ENCODE measurements at regions of chr5 and their contacts with region 1.

Region 1: DNA sequence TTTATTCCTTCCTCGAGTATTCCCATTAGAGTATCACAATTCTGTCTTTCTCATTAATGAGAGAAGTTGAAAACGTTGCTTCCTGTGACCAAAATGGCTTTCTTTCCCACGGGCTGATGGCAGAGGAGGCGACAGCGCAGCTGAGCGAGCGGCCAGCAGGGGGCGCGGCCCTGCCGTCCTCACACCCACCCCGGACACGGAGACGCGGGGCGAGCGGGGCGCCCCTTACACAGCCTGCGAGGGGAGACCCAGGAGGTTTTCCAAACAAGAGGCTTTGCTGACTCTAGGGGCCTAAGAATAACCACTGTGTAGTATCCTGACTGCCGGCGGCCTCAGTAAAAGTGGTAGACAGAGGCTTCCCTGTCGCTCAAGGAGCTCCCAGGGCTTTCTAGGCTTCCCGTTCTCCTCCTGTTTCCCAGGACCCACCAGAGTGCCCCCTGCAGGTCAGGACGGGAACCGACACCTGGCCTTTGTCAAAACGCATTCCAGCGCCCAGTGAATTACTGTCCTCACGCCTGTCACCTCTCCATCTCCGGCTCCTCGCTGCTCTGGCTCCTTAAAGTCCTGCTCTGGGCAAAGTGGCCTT is 27.3 kb upstream of the FGF1 start:
- DNase-seq: peak; percentile 90
- H3K4me3 ChIP-seq: peak overlapping the region in 2 of 3 experiments; percentile 39 to 44
- H3K27ac ChIP-seq: peak overlapping the region; percentile 43
- H3K4me1 ChIP-seq: peaks cover 11% of the 10 kb centered on the region
- H3K27me3 ChIP-seq: peaks cover 0 to 5% of the 10 kb centered on the region in 2 experiments
- CTCF ChIP-seq: peak; percentile 83 to 98
- POLR2A ChIP-seq: no peak

Region 2: DNA sequence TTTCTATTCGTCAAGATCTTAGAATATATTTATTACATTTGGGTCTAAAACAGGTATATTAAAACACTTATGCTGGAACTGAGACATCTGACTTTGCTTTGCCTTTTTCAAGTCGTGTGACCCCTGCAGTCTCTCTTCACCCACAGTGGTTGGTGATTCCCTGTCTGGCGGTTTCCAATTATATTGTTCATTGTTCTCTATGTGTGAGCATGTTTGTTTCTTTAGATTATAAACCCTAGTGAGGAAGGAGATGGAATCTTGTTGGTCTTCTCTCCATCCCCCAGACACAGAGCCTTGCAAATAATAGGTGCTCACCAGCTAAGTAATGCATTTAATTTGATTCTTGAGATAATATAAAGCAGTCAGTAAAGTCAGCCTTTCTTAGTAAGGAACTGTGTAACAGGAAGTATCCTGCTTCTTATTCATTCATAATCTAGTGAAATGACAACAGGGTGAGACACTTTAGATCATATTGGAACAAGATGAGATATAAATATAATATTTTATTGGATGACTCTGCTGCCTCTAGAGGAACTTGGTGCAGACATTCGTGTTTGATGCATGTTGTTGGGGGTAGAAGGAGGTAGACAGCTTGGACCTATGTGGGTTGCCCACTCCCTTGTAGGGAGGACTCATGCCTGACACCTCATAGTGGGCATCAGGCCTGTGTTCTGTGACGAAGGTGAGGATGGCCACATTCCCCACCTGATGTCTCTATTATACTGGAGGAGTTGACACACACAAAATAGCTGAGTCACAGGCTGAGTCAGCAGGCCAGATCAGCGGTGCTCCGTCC is 115.5 kb before region 1 on chr5:
- CTCF ChIA-PET with region 1: interaction called, 11 read pairs
- POLR2A ChIA-PET with region 1: no interaction called
- dilution Hi-C with region 1: no loop called
- intact Hi-C with region 1: no loop called
- DNase-seq: peak; percentile 81
- H3K4me3 ChIP-seq: no peak overlapping the region
- H3K27ac ChIP-seq: no peak overlapping the region
- H3K4me1 ChIP-seq: peaks cover 26% of the 10 kb centered on the region
- H3K27me3 ChIP-seq: no peaks in the 10 kb centered on the region
- CTCF ChIP-seq: no peak
- POLR2A ChIP-seq: no peak

Region 3: GRCh38 chr5:142664636-142665035 is 48.6 kb before region 1 on chr5:
- CTCF ChIA-PET with region 1: interaction called, 13 read pairs
- POLR2A ChIA-PET with region 1: no interaction called
- dilution Hi-C with region 1: no loop called
- intact Hi-C with region 1: no loop called
- DNase-seq: no peak
- H3K4me3 ChIP-seq: no peak overlapping the region
- H3K27ac ChIP-seq: no peak overlapping the region
- H3K4me1 ChIP-seq: no peaks in the 10 kb centered on the region
- H3K27me3 ChIP-seq: peaks cover 13 to 25% of the 10 kb centered on the region in 2 experiments
- CTCF ChIP-seq: no peak
- POLR2A ChIP-seq: no peak

Region 4: GRCh38 chr5:142748568-142749249 is 35.5 kb after region 1 on chr5:
- CTCF ChIA-PET with region 1: interaction called, 41 read pairs
- POLR2A ChIA-PET with region 1: no interaction called
- dilution Hi-C with region 1: no loop called
- intact Hi-C with region 1: loop called (anchors 2 kb)
- DNase-seq: peak; percentile 13
- H3K4me3 ChIP-seq: no peak overlapping the region
- H3K27ac ChIP-seq: peak overlapping the region; percentile 57
- H3K4me1 ChIP-seq: peaks cover 35% of the 10 kb centered on the region
- H3K27me3 ChIP-seq: no peaks in the 10 kb centered on the region
- CTCF ChIP-seq: peak; percentile 18 to 19
- POLR2A ChIP-seq: no peak

Region 5: GRCh38 chr5:142860270-142860669 is 147.1 kb after region 1 on chr5:
- CTCF ChIA-PET with region 1: interaction called, 24 read pairs
- POLR2A ChIA-PET with region 1: no interaction called
- dilution Hi-C with region 1: no loop called
- intact Hi-C with region 1: no loop called
- DNase-seq: no peak
- H3K4me3 ChIP-seq: no peak overlapping the region
- H3K27ac ChIP-seq: no peak overlapping the region
- H3K4me1 ChIP-seq: peaks cover 8% of the 10 kb centered on the region
- H3K27me3 ChIP-seq: no peaks in the 10 kb centered on the region
- CTCF ChIP-seq: no peak
- POLR2A ChIP-seq: no peak

Region 6: DNA sequence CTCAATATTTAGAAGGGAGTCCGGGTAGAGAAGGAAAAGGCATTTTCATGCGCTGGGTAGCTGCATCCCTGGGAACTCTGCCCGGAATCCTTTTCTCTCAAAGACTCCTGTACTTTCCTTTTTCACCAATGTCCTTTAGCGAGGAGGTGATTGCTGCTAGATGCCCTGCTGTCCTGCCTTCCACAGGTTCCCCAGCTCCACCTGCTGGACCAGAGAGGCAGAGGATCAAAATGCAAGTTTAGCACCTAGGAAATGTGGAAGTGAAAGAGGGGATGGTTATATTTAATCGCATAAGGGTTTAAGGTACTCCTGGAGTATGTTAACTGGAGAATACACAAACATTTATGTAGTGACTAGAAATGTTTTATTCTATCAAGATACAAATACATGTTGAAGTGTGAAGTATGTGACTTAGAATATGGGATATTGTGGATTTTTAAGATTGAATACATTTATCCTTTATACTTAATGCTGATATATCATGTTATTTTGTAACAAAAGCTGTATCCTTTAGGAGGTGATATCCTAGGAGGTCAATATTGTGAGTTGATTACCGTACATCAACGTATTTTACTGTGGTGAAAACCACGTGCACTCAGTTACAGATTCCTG is 202.7 kb after region 1 on chr5:
- CTCF ChIA-PET with region 1: interaction called, 10 read pairs
- POLR2A ChIA-PET with region 1: no interaction called
- dilution Hi-C with region 1: no loop called
- intact Hi-C with region 1: no loop called
- DNase-seq: no peak
- H3K4me3 ChIP-seq: no peak overlapping the region
- H3K27ac ChIP-seq: no peak overlapping the region
- H3K4me1 ChIP-seq: no peaks in the 10 kb centered on the region
- H3K27me3 ChIP-seq: no peaks in the 10 kb centered on the region
- CTCF ChIP-seq: peak; percentile 31 to 41
- POLR2A ChIP-seq: no peak

Region 7: GRCh38 chr5:144191998-144192397 is 1478.8 kb after region 1 on chr5:
- CTCF ChIA-PET with region 1: no interaction called
- POLR2A ChIA-PET with region 1: no interaction called
- dilution Hi-C with region 1: no loop called
- intact Hi-C with region 1: loop called (anchors 10 kb)
- DNase-seq: peak; percentile 88
- H3K4me3 ChIP-seq: no peak overlapping the region
- H3K27ac ChIP-seq: peak overlapping the region; percentile 88
- H3K4me1 ChIP-seq: peaks cover 44% of the 10 kb centered on the region
- H3K27me3 ChIP-seq: no peaks in the 10 kb centered on the region
- CTCF ChIP-seq: peak; percentile 43 to 60
- POLR2A ChIP-seq: no peak